ENCODE measurements at regions of chr7 and their contacts with region 1.

Region 1: DNA sequence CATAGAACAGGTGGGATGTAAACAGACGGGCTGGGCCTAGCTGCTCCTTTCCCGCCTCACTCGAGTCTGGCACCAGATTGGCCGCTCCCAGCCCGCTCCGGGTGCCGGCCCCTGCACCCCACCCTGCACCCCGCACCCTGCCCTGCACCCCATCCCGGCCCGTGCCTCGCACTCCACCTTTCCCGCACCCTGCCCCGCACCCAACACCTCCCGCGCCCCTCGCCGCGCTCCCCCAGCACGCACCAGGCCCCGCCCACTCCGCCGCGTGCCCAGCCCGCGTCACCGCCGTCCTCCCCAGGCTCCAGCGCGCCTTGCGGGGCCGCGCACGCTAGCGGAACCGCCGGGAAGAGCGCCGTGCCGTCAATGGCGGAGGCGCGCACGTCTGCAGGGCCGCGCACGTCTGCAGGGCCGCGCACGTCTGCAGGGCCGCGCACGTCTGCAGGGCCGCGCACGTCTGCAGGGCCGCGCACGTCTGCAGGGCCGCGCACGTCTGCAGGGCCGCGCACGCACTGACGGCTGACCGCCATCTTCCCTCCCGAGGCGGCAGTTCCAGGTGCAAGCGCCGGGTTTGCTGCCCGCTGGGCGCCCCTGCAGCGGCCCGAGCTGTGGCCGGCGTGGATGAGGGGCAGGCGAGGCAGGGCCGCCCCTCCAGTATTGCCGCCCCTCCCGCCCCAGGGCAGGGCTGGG is at the start of gene UBE3C:
- DNase-seq: peak; percentile 89 to 95
- H3K4me3 ChIP-seq: peak within 1 kb of the TSS; percentile 79
- H3K4me3 Mint-ChIP-seq: peak within 1 kb of the TSS; percentile 73
- H3K27ac Mint-ChIP-seq: peak within 1 kb of the TSS; percentile 39
- H3K4me1 ChIP-seq: peaks cover 10% of the 10 kb centered on the region
- H3K4me1 Mint-ChIP-seq: peaks cover 24% of the 10 kb centered on the region
- H3K27me3 ChIP-seq: no peaks in the 10 kb centered on the region
- H3K27me3 Mint-ChIP-seq: no peaks in the 10 kb centered on the region
- CTCF ChIP-seq: no peak
- total RNA-seq, gene UBE3C: 76.1 and 78.8 TPM in 2 replicates

Region 2: GRCh38 chr7:156892821-156893706 is 245.5 kb before region 1 on chr7 and contains the start of gene LMBR1:
- CTCF ChIA-PET with region 1: interaction called, 3 read pairs
- POLR2A ChIA-PET with region 1: no interaction called
- intact Hi-C with region 1: loop called (anchors 2 kb)
- DNase-seq: peak; percentile 95
- H3K4me3 ChIP-seq: peak within 1 kb of the TSS; percentile 69
- H3K4me3 Mint-ChIP-seq: peak within 1 kb of the TSS; percentile 80
- H3K27ac Mint-ChIP-seq: peak within 1 kb of the TSS; percentile 90
- H3K4me1 ChIP-seq: peaks cover 3% of the 10 kb centered on the region; the same call in 1 of the 2 replicates
- H3K4me1 Mint-ChIP-seq: peaks cover 20% of the 10 kb centered on the region
- H3K27me3 ChIP-seq: no peaks in the 10 kb centered on the region
- H3K27me3 Mint-ChIP-seq: no peaks in the 10 kb centered on the region
- CTCF ChIP-seq: peak; percentile 46 to 59
- total RNA-seq, gene LMBR1: 77.9 and 90.8 TPM in 2 replicates

Region 3: DNA sequence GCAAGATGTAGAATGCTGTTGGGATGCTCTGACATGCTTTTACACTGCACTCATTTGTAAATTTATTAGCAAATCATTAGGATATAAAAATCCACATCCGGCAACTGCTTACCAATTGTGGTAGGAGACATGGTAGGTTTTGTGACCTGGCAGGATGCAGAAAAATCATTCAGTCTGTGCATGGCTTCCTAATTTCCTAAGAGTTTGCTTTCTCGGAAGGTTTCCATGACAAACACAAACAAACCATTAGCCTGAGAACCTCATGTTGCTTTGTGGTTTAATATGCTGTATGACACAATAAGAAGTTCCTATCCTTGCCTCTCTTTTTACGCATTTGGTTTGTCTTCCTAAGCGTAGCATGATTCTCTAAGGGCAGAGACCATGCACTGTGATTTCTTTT is 230.9 kb before region 1 on chr7:
- CTCF ChIA-PET with region 1: no interaction called
- POLR2A ChIA-PET with region 1: no interaction called
- intact Hi-C with region 1: loop called (anchors 5 kb)
- DNase-seq: no peak
- H3K4me3 ChIP-seq: no peak overlapping the region
- H3K4me3 Mint-ChIP-seq: no peak overlapping the region
- H3K27ac Mint-ChIP-seq: no peak overlapping the region
- H3K4me1 ChIP-seq: no peaks in the 10 kb centered on the region
- H3K4me1 Mint-ChIP-seq: peaks cover 8% of the 10 kb centered on the region
- H3K27me3 ChIP-seq: no peaks in the 10 kb centered on the region
- H3K27me3 Mint-ChIP-seq: no peaks in the 10 kb centered on the region
- CTCF ChIP-seq: no peak

Region 4: GRCh38 chr7:156969972-156970420 is 168.6 kb before region 1 on chr7:
- CTCF ChIA-PET with region 1: no interaction called
- POLR2A ChIA-PET with region 1: no interaction called
- intact Hi-C with region 1: loop called (anchors 1 kb)
- DNase-seq: peak in 1 of 2 experiments; percentile 26
- H3K4me3 ChIP-seq: no peak overlapping the region
- H3K4me3 Mint-ChIP-seq: no peak overlapping the region
- H3K27ac Mint-ChIP-seq: no peak overlapping the region
- H3K4me1 ChIP-seq: no peaks in the 10 kb centered on the region
- H3K4me1 Mint-ChIP-seq: no peaks in the 10 kb centered on the region
- H3K27me3 ChIP-seq: no peaks in the 10 kb centered on the region
- H3K27me3 Mint-ChIP-seq: no peaks in the 10 kb centered on the region
- CTCF ChIP-seq: peak; percentile 22 to 49